ENCODE measurements at regions of chr16 and their contacts with region 1.

Region 1: DNA sequence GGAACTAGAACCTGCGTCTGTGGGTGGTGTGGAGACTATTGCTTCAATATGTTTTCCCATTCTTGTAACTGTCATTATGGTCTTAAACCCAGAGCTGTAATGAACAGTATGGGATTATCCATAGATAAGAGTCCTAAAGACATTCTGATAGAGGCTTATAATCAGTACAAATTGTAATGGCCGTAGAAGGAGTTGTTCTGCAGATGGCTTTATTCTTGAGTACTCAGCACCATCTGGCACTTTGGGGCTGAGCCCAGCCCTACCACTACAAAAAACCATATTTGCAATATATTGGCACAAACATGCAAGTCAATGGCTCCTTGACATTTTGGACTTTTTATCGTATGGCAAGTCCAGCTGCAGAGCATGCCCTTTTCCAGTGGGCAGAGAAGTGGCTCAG is 150.0 kb downstream of the HS3ST4 start:
- DNase-seq: no peak
- H3K4me3 ChIP-seq: no peak overlapping the region
- H3K27ac ChIP-seq: no peak overlapping the region
- H3K4me1 ChIP-seq: peaks cover 0 to 6% (median 0%) of the 10 kb centered on the region in 3 donors
- H3K27me3 ChIP-seq: peaks cover 0 to 6% (median 0%) of the 10 kb centered on the region in 4 donors
- CTCF ChIP-seq: no peak
- POLR2A ChIP-seq: no peak

Region 2: DNA sequence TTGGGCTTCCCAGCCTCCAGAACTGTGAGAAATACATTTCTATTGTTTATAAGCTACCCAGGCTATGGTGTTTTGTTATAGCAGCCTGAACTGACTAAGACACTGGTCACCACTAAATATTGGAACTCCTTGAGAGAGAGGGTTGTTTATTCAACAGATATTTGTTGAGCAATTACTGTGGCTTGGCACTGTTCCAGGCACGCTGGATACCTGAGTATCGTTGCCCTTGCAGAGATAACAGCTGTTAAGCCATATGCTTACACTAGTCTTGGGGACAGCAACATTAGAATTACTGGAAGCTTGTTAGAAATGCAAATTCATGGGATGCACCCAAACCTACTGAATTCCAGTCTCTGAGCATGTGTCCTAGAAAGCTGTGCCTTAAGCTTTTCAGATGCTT is 80.7 kb after region 1 on chr16:
- intact Hi-C with region 1: no loop called
- DNase-seq: no peak
- H3K4me3 ChIP-seq: no peak overlapping the region
- H3K27ac ChIP-seq: no peak overlapping the region
- H3K4me1 ChIP-seq: no peaks in the 10 kb centered on the region
- H3K27me3 ChIP-seq: no peaks in the 10 kb centered on the region
- CTCF ChIP-seq: no peak
- POLR2A ChIP-seq: no peak

Region 3: DNA sequence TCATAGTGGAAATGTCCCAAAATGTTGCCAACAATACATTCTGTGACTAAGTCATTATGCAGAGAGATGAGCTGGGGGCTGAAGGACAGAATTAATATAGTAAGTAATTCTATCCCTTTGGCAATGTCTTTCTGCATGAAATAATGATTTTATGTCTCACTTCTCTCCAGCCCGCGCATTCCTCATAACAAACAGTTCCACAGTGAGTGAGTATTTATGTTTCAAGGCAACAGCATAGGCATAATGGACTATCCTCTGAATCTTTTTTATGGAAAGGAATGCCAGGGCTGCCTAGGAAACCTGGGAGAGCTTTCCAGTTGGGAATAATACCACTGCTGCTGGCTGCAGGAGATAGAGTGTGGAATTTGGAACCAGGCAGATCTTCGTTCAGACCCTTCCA is 327.7 kb after region 1 on chr16:
- intact Hi-C with region 1: no loop called
- DNase-seq: no peak
- H3K4me3 ChIP-seq: no peak overlapping the region
- H3K27ac ChIP-seq: no peak overlapping the region
- H3K4me1 ChIP-seq: no peaks in the 10 kb centered on the region
- H3K27me3 ChIP-seq: no peaks in the 10 kb centered on the region
- CTCF ChIP-seq: no peak
- POLR2A ChIP-seq: no peak

Region 4: GRCh38 chr16:27109666-27110523 is 1268.1 kb after region 1 on chr16:
- intact Hi-C with region 1: loop called (anchors 10 kb)
- DNase-seq: no peak
- H3K4me3 ChIP-seq: peak overlapping the region in 3 of 4 donors; percentile 24 to 60 (median 34)
- H3K27ac ChIP-seq: peak overlapping the region in 2 of 4 donors; percentile 36 to 57
- H3K4me1 ChIP-seq: peaks cover 0 to 16% (median 0%) of the 10 kb centered on the region in 3 donors
- H3K27me3 ChIP-seq: peaks cover 0 to 6% (median 0%) of the 10 kb centered on the region in 4 donors
- CTCF ChIP-seq: peak; percentile 74 to 92 (median 80)
- POLR2A ChIP-seq: no peak